HepG2 (cell line): ENCODE measurements at regions of chr6 and their contacts with region 1.

Region 1: DNA sequence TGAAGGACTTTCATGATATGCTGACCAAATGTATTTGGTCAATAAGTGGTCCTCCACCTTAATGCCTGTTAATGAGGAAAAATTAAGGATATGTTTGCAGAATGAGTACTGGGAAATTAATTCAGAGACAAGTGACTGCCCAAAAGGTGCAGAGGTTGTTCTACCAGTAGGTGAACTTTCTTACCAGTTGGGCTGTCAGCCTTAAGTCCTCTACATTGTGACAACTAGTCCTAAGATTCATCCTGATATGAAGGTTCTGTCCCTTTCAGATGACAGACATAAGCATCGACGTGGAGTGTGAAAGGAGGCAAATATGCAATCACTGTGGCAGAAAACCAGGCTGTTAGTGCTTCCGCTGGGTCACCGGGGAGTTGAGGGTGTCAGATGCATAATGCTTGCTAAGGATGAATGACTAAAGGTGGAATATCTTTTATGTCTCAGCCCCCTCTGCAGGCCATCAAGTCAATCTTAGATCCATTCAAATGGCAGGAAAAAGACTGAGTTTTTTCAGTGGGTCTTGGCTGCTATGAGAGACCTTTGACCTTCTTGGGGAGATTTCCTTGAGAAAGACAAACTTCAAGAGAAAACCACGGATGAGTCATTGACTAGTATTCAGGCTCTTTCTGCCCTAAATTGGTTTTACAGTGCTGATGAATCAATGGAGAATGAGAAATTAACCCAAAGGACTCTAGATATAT is 226.0 kb downstream of the TPBG start:
- DNase-seq: peak; percentile 3
- ATAC-seq: peak; percentile 39; the same call in 1 of the 3 replicates
- H3K4me3 ChIP-seq: no peak overlapping the region
- H3K27ac ChIP-seq: no peak overlapping the region
- H3K4me1 ChIP-seq: no peaks in the 10 kb centered on the region
- H3K27me3 ChIP-seq: no peaks in the 10 kb centered on the region
- CTCF ChIP-seq: 0 out of 2 replicates have a peak, but pooled peaks have one; percentile 22
- EP300 ChIP-seq: no peak
- POLR2A ChIP-seq: no peak
- RAD21 ChIP-seq: no peak

Region 2: GRCh38 chr6:81929828-81930227 is 659.8 kb before region 1 on chr6:
- CTCF ChIA-PET with region 1: no interaction called
- POLR2A ChIA-PET with region 1: no interaction called
- in situ Hi-C with region 1: no loop called
- intact Hi-C with region 1: no loop called
- DNase-seq: no peak
- ATAC-seq: no peak
- H3K4me3 ChIP-seq: no peak overlapping the region
- H3K27ac ChIP-seq: no peak overlapping the region
- H3K4me1 ChIP-seq: peaks cover 30% of the 10 kb centered on the region
- H3K27me3 ChIP-seq: no peaks in the 10 kb centered on the region
- CTCF ChIP-seq: no peak
- EP300 ChIP-seq: no peak
- POLR2A ChIP-seq: no peak
- RAD21 ChIP-seq: no peak

Region 3: DNA sequence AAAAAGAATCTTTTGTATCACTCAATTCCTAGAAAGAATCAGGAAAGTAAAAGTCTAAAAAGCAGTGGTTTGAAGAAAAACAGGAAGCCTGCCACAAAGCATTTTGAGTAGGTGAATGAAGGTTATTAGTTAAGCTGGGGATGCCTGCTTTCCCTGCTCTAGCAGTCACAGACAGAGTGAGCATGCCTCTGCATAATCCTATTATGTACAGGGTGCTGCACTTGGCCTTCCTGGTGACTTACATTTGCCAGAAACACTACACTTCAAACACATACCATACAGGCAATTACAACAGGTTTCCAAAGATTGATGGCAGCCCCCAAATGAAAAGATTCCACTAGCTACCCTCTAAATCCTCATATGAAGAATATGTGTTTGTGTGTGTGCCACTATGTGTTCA is 95.3 kb before region 1 on chr6:
- CTCF ChIA-PET with region 1: no interaction called
- POLR2A ChIA-PET with region 1: no interaction called
- in situ Hi-C with region 1: no loop called
- intact Hi-C with region 1: no loop called
- DNase-seq: no peak
- ATAC-seq: no peak
- H3K4me3 ChIP-seq: no peak overlapping the region
- H3K27ac ChIP-seq: no peak overlapping the region
- H3K4me1 ChIP-seq: no peaks in the 10 kb centered on the region
- H3K27me3 ChIP-seq: no peaks in the 10 kb centered on the region
- CTCF ChIP-seq: no peak
- EP300 ChIP-seq: no peak
- POLR2A ChIP-seq: no peak
- RAD21 ChIP-seq: no peak

Region 4: DNA sequence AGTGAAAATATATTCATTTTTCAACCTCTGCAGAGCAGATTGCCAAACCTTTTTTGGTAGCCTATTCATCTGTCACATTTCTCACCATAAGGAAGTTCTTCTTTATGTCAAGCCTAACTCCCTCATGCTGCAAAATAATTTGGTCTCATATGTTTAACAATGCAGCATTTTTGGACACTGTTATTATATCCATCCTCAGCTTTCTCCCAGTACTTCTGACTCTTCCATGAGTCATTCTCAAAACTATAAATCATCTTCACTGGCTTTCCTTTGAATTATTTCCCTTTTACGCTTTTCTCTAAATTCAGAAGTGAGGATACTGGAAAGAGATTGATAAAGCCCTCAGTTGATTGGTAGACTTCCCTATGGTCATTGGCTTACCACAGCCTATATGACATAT is 33.9 kb before region 1 on chr6:
- CTCF ChIA-PET with region 1: no interaction called
- POLR2A ChIA-PET with region 1: no interaction called
- in situ Hi-C with region 1: no loop called
- intact Hi-C with region 1: no loop called
- DNase-seq: no peak
- ATAC-seq: no peak
- H3K4me3 ChIP-seq: no peak overlapping the region
- H3K27ac ChIP-seq: no peak overlapping the region
- H3K4me1 ChIP-seq: no peaks in the 10 kb centered on the region
- H3K27me3 ChIP-seq: no peaks in the 10 kb centered on the region
- CTCF ChIP-seq: no peak
- EP300 ChIP-seq: no peak
- POLR2A ChIP-seq: no peak
- RAD21 ChIP-seq: no peak

Region 5: GRCh38 chr6:83067448-83068413 is 478.1 kb after region 1 on chr6 and contains the start of gene DOP1A:
- CTCF ChIA-PET with region 1: no interaction called
- POLR2A ChIA-PET with region 1: no interaction called
- in situ Hi-C with region 1: loop called (anchors 25 kb)
- intact Hi-C with region 1: no loop called
- DNase-seq: peak; percentile 86
- ATAC-seq: peak; percentile 91
- H3K4me3 ChIP-seq: peak within 1 kb of the TSS; percentile 79 to 87 (median 86)
- H3K27ac ChIP-seq: peak within 1 kb of the TSS; percentile 85
- H3K4me1 ChIP-seq: peaks cover 30% of the 10 kb centered on the region
- H3K27me3 ChIP-seq: no peaks in the 10 kb centered on the region; a peak in 1 of 5 replicates
- CTCF ChIP-seq: peak; percentile 97
- EP300 ChIP-seq: no peak
- POLR2A ChIP-seq: peak; percentile 67 to 76
- RAD21 ChIP-seq: peak; percentile 89
- total RNA-seq, gene DOP1A: 16.7 and 18.9 TPM in 2 replicates